Activated CD4-positive, alpha-beta T cell treated with anti-CD3 and anti-CD28 coated beads for 36 hours (primary cell): ENCODE measurements at regions of chr9 and their contacts with region 1.

Region 1: GRCh38 chr9:137423004-137423874 is at the starts of genes EXD3 and NOXA1:
- DNase-seq: peak; percentile 98
- ATAC-seq: peak; percentile 95
- H3K4me3 Mint-ChIP-seq: peak within 1 kb of the TSS; percentile 82
- H3K27ac Mint-ChIP-seq: peak within 1 kb of the TSS; percentile 66
- H3K4me1 Mint-ChIP-seq: peaks cover 12% of the 10 kb centered on the region
- H3K27me3 Mint-ChIP-seq: no peaks in the 10 kb centered on the region
- total RNA-seq, gene EXD3: 6.7 to 7.1 TPM
- total RNA-seq, gene NOXA1: 0.97 to 1.7 TPM

Region 2: DNA sequence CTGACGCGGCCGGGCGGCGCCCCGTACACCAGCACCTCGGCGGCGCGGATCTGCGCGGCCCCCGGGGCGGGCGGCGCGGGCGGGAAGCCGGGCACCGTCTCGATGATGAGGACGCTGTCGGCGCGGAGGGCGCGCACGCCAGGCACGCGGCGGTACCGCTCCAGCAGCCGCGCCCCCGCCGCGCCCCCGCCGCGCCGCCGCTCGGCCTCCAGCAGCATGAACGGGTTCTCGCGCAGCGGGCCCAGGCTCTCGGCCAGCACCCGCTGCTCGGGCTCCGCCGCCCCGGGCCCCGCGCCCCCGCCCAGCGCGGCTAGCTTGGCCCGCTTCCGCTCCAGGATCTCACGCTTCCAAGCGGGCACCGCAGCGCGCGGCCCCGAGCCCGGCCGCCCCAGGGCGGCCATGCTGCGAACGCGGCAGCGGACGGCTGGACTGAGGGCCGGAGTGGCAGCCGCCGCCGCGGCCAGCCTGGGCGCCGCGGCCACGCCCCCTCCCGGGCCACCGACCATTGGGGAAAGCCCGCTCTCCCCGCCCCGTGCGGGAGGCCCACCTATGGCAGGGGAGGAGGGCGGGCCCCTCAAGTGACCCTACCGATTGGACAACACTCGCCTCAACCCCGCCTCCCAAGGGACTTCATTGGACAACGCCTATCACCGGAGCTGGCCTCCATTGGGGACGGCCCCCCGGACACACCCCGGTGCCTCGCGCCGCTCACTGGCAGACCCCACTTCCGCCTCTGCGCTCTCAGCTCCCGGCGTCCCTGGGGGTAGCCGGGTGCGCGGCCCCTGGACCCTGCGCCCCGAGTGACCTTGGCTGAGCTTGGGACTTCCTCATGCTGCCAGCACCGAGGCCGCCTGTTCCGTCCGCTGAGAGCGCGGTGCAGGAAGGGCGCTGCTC is 222.7 kb before region 1 on chr9 and contains the start of gene TPRN:
- CTCF ChIA-PET with region 1: no interaction called
- POLR2A ChIA-PET with region 1: no interaction called
- intact Hi-C with region 1: loop called in 1 of 2 experiments (anchors 1 kb)
- DNase-seq: peak; percentile 99
- ATAC-seq: peak; percentile 99
- H3K4me3 Mint-ChIP-seq: peak within 1 kb of the TSS; percentile 79
- H3K27ac Mint-ChIP-seq: peak within 1 kb of the TSS; percentile 76
- H3K4me1 Mint-ChIP-seq: peaks cover 29% of the 10 kb centered on the region
- H3K27me3 Mint-ChIP-seq: no peaks in the 10 kb centered on the region
- total RNA-seq, gene TPRN: 5.6 to 5.8 TPM

Region 3: DNA sequence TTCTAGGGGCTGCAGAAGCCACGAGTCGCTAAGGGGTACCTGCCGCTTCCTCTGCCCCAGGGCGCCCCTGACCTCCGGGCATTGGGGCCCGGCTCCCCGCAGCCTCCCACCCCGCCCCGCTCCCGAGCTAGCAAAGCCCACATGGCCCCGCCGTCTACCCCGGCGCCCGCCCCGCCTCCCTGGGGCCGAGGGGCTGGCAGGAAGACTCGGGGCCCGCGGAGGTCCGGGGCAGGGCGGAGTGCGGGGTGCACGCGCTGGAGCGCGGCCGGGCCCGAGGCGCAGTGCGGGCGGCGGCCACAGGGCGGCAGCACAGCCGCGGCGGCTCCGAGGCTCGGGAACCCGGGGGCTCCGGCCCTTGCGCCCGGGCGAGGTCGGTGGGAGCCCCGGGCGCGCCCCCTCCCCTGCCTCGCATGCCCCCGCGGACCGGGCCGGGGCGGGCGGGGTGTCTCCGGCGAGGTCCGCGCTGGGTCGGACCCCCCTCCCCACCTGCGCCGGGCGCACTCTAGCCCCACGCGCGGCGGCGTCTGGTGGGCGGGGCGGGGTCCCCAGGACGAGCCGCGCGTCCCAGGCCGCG is 127.9 kb before region 1 on chr9:
- CTCF ChIA-PET with region 1: interaction called, 3 read pairs
- POLR2A ChIA-PET with region 1: no interaction called
- intact Hi-C with region 1: loop called in 1 of 2 experiments (anchors 1 kb)
- DNase-seq: peak; percentile 72
- ATAC-seq: peak; percentile 79
- H3K4me3 Mint-ChIP-seq: no peak overlapping the region
- H3K27ac Mint-ChIP-seq: no peak overlapping the region
- H3K4me1 Mint-ChIP-seq: peaks cover 3% of the 10 kb centered on the region
- H3K27me3 Mint-ChIP-seq: peaks cover 28% of the 10 kb centered on the region

Region 4: GRCh38 chr9:137453643-137454081 is 30.4 kb after region 1 on chr9:
- CTCF ChIA-PET with region 1: no interaction called
- POLR2A ChIA-PET with region 1: no interaction called
- intact Hi-C with region 1: loop called in 1 of 2 experiments (anchors 1 kb)
- DNase-seq: peak; percentile 84
- ATAC-seq: peak; percentile 83
- H3K4me3 Mint-ChIP-seq: no peak overlapping the region
- H3K27ac Mint-ChIP-seq: no peak overlapping the region
- H3K4me1 Mint-ChIP-seq: peaks cover 38% of the 10 kb centered on the region
- H3K27me3 Mint-ChIP-seq: no peaks in the 10 kb centered on the region

Region 5: GRCh38 chr9:137551651-137552384 is 128.6 kb after region 1 on chr9 and contains the start of gene MRPL41:
- CTCF ChIA-PET with region 1: no interaction called
- POLR2A ChIA-PET with region 1: no interaction called
- intact Hi-C with region 1: loop called in 1 of 2 experiments (anchors 1 kb)
- DNase-seq: peak; percentile 91
- ATAC-seq: peak; percentile 93
- H3K4me3 Mint-ChIP-seq: peak within 1 kb of the TSS; percentile 77
- H3K27ac Mint-ChIP-seq: peak within 1 kb of the TSS; percentile 63
- H3K4me1 Mint-ChIP-seq: peaks cover 11% of the 10 kb centered on the region
- H3K27me3 Mint-ChIP-seq: no peaks in the 10 kb centered on the region
- total RNA-seq, gene MRPL41: 20.9 to 26.8 TPM

Region 6: GRCh38 chr9:137618105-137619067 is 195.1 kb after region 1 on chr9 and contains the start of gene EHMT1:
- CTCF ChIA-PET with region 1: no interaction called
- POLR2A ChIA-PET with region 1: no interaction called
- intact Hi-C with region 1: loop called in 1 of 2 experiments (anchors 1 kb)
- DNase-seq: peak; percentile 92
- ATAC-seq: peak; percentile 82
- H3K4me3 Mint-ChIP-seq: peak within 1 kb of the TSS; percentile 85
- H3K27ac Mint-ChIP-seq: peak within 1 kb of the TSS; percentile 90
- H3K4me1 Mint-ChIP-seq: peaks cover 37% of the 10 kb centered on the region
- H3K27me3 Mint-ChIP-seq: no peaks in the 10 kb centered on the region
- total RNA-seq, gene EHMT1: 66.6 to 76.7 TPM

Region 7: GRCh38 chr9:137647096-137647714 is 224.0 kb after region 1 on chr9:
- CTCF ChIA-PET with region 1: no interaction called
- POLR2A ChIA-PET with region 1: no interaction called
- intact Hi-C with region 1: no loop called
- DNase-seq: no peak
- ATAC-seq: peak; percentile 55
- H3K4me3 Mint-ChIP-seq: no peak overlapping the region
- H3K27ac Mint-ChIP-seq: peak overlapping the region; percentile 38
- H3K4me1 Mint-ChIP-seq: peaks cover 41% of the 10 kb centered on the region
- H3K27me3 Mint-ChIP-seq: no peaks in the 10 kb centered on the region

Region 8: DNA sequence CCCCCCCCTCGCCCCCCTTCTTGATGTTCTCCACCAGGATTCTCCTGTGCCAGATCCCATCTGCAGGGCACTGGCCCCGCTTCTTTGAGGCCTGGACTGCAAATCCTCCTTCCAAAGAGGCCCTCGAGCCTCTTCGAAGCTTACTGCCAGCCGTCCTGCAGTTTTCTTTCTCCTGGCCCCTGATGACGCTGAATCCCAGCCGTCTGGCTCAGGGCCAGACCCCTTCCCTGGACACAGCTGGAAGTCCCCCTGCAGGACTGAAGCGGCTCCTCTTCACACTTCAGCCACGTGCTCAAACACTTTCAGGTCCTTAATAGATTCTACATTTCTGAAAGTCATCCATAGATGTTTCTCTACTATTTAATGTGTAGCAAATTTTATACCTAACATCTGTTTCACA is 317.1 kb after region 1 on chr9:
- CTCF ChIA-PET with region 1: no interaction called
- POLR2A ChIA-PET with region 1: no interaction called
- intact Hi-C with region 1: no loop called
- DNase-seq: no peak
- ATAC-seq: no peak
- H3K4me3 Mint-ChIP-seq: no peak overlapping the region
- H3K27ac Mint-ChIP-seq: no peak overlapping the region
- H3K4me1 Mint-ChIP-seq: peaks cover 10% of the 10 kb centered on the region
- H3K27me3 Mint-ChIP-seq: no peaks in the 10 kb centered on the region